Astrocyte of the cerebellum (primary cell): ENCODE measurements at regions of chr5 and their contacts with region 1.

Region 1: GRCh38 chr5:141681695-141682641 is at the start of gene ARAP3:
- DNase-seq: no peak
- H3K4me3 ChIP-seq: peak within 1 kb of the TSS; percentile 32
- CTCF ChIP-seq: no peak

Region 2: DNA sequence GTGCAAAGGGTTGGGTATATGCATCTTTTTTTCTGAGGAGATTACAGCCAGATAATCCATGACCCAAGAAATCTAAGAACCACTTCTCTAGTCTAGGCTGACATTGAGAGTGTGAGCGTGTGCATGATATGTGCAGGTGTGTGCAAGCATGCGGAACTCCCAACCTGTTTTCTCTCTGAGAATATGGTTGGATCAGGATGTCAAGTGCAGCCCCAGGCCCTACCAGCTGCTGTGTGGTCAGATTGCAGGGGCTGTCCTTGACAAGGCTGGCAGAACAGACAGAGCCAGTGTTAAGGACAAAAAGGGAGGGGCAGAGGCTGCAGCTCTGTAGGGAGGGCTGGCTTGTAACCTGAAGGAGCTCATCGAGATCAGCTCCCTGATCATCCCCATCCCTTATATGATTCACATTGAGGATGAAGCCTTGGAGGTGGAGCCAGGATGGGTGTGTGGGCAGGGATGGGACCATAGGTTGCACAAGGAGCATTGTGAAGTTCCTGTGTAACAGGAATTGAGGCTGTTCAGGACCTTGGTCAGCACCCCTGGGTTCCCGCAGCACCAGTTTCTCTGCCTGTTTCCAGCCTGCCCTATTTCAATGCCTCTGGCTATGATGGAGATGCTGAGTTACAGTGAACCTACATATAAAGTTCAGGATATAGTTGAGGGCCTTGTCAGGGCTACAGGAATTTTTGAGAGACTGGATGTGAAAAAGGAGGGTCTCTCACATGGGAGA is 52.7 kb after region 1 on chr5:
- in situ Hi-C with region 1: loop called (anchors 5 kb)
- DNase-seq: peak; percentile 29
- H3K4me3 ChIP-seq: no peak overlapping the region
- CTCF ChIP-seq: no peak